Aorta (tissue), 5 donors: ENCODE measurements at regions of chr11 and their contacts with region 1.

Region 1: GRCh38 chr11:44760917-44761550 is 34.3 kb downstream of the TSPAN18 start:
- DNase-seq: peak in 1 of 2 donors; percentile 65
- ATAC-seq: peak; percentile 85
- H3K4me3 ChIP-seq: no peak overlapping the region
- H3K27ac ChIP-seq: no peak overlapping the region
- H3K4me1 ChIP-seq: peaks cover 0 to 3% of the 10 kb centered on the region in 2 donors
- H3K27me3 ChIP-seq: no peaks in the 10 kb centered on the region

Region 2: DNA sequence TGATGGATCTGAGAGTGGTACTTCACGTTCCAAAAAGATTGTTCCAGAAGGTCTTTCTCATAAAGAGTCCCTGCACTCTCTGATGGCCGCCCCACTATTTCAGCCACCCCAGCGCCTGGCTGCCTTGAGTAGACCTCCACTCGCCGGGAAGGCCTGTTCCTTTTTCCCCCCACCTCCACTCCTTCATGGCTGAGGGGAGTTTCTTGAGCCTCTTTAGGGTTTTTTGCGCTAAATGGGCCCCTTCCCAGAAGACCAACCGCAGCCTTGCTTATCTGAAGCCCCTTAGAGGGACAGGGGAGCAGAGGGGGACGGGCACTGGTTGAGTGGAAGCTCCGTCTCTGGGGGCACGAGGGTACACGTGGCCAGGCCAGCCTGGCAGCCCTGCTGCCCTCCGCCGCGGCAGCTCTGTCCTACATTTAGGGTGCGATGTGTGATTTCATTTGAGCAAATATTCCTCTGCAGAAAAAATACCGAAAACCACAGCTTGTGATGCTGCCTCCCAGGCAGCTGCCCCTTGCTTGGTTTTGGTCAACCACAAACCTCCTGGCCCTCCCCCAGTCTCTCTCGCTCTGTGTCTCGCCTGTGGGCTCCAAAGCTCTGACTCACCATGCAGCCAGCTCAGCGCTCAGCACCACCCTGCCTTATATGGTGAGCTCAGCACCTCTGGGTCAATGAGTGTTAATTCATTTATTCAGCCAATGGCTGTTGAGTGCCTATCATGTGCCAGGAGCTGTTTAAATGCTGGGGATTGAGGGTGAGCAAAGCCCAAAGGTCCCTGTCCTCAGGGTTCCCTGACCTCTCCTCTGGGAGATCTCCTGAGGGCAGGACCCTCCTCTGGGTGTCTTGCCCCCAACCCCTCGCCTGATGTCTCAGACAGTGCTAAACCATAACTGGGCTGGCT is 101.1 kb after region 1 on chr11:
- intact Hi-C with region 1: loop called (anchors 5 to 10 kb)
- DNase-seq: peak; percentile 94 to 95
- ATAC-seq: peak; percentile 91
- H3K4me3 ChIP-seq: no peak overlapping the region
- H3K27ac ChIP-seq: peak overlapping the region; percentile 57 to 89
- H3K4me1 ChIP-seq: peaks cover 0 to 1% of the 10 kb centered on the region in 2 donors
- H3K27me3 ChIP-seq: no peaks in the 10 kb centered on the region

Region 3: GRCh38 chr11:45097721-45098493 is 336.9 kb after region 1 on chr11:
- intact Hi-C with region 1: loop called in 1 of 2 experiments (anchors 10 kb)
- DNase-seq: peak; percentile 79 to 92
- ATAC-seq: peak; percentile 86
- H3K4me3 ChIP-seq: no peak overlapping the region
- H3K27ac ChIP-seq: no peak overlapping the region
- H3K4me1 ChIP-seq: peaks cover 0 to 2% of the 10 kb centered on the region in 2 donors
- H3K27me3 ChIP-seq: no peaks in the 10 kb centered on the region